ENCODE measurements at regions of chr14 and their contacts with region 1.

Region 1: DNA sequence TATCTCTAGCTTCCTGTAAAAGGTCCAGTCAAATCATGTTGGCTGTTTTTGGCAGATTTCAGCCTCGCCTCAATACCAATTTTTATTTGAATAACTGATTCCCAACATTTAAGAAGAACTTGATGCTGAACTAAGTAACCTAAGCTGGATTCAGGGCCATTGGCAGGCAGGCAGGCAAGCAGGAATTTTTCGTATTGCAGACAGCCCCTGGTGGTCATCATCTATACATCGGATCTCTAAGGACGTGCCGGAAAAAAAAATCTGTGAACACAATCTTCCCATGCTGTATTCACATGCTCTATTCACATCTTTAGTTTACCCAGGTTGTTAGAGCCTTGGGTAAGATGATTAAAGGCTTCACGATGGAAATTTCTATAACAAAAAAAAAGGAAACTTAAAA is 7.0 kb downstream of the VCPKMT start:
- DNase-seq: no peak
- H3K4me3 ChIP-seq: no peak overlapping the region
- H3K27ac ChIP-seq: no peak overlapping the region
- H3K4me1 ChIP-seq: no peaks in the 10 kb centered on the region
- H3K27me3 ChIP-seq: no peaks in the 10 kb centered on the region
- CTCF ChIP-seq: no peak
- EP300 ChIP-seq: no peak
- POLR2A ChIP-seq: no peak

Region 2: GRCh38 chr14:49867831-49868723 is 241.3 kb before region 1 on chr14:
- intact Hi-C with region 1: loop called in 3 of 4 experiments (anchors 5 to 10 kb)
- DNase-seq: peak; percentile 94 to 97 (median 96)
- H3K4me3 ChIP-seq: peak overlapping the region; percentile 69
- H3K27ac ChIP-seq: peak overlapping the region in 1 of 2 donors; percentile 64
- H3K4me1 ChIP-seq: peaks cover 2% of the 10 kb centered on the region
- H3K27me3 ChIP-seq: no peaks in the 10 kb centered on the region
- CTCF ChIP-seq: no peak
- EP300 ChIP-seq: no peak
- POLR2A ChIP-seq: peak; percentile 68

Region 3: GRCh38 chr14:49879683-49880204 is 229.6 kb before region 1 on chr14:
- intact Hi-C with region 1: loop called in 1 of 4 experiments (anchors 10 kb)
- DNase-seq: peak in 1 of 5 donors; percentile 34
- H3K4me3 ChIP-seq: no peak overlapping the region
- H3K27ac ChIP-seq: no peak overlapping the region
- H3K4me1 ChIP-seq: peaks cover 5% of the 10 kb centered on the region
- H3K27me3 ChIP-seq: no peaks in the 10 kb centered on the region
- CTCF ChIP-seq: peak in 2 of 3 donors; percentile 16 to 33
- EP300 ChIP-seq: no peak
- POLR2A ChIP-seq: no peak

Region 4: GRCh38 chr14:49892636-49893308 is 216.6 kb before region 1 on chr14 and contains the start of gene ARF6:
- intact Hi-C with region 1: loop called in 2 of 4 experiments (anchors 2 to 10 kb)
- DNase-seq: peak; percentile 98 to 99 (median 98)
- H3K4me3 ChIP-seq: peak within 1 kb of the TSS; percentile 100
- H3K27ac ChIP-seq: peak within 1 kb of the TSS; percentile 97 to 99
- H3K4me1 ChIP-seq: peaks cover 3% of the 10 kb centered on the region
- H3K27me3 ChIP-seq: no peaks in the 10 kb centered on the region
- CTCF ChIP-seq: peak in 2 of 3 donors; percentile 9 to 30
- EP300 ChIP-seq: no peak
- POLR2A ChIP-seq: peak; percentile 79
- total RNA-seq, gene ARF6: 19.8 to 39.7 (median 34.9) TPM

Region 5: GRCh38 chr14:49971156-49972130 is 137.9 kb before region 1 on chr14:
- intact Hi-C with region 1: no loop called
- DNase-seq: no peak
- H3K4me3 ChIP-seq: no peak overlapping the region
- H3K27ac ChIP-seq: no peak overlapping the region
- H3K4me1 ChIP-seq: peaks cover 19% of the 10 kb centered on the region
- H3K27me3 ChIP-seq: no peaks in the 10 kb centered on the region
- CTCF ChIP-seq: no peak
- EP300 ChIP-seq: no peak
- POLR2A ChIP-seq: no peak

Measured in ovary (tissue), 10 donors.